ENCODE measurements at regions of chr18 and their contacts with region 1.

Region 1: GRCh38 chr18:48675352-48675761 is 136.5 kb downstream of the CTIF start:
- DNase-seq: peak; percentile 85
- ATAC-seq: peak; percentile 93
- H3K4me3 ChIP-seq: no peak overlapping the region
- H3K4me3 Mint-ChIP-seq: no peak overlapping the region
- H3K27ac ChIP-seq: no peak overlapping the region
- H3K27ac Mint-ChIP-seq: no peak overlapping the region
- H3K4me1 ChIP-seq: peaks cover 4 to 12% of the 10 kb centered on the region in 2 donors
- H3K4me1 Mint-ChIP-seq: peaks cover 10% of the 10 kb centered on the region
- H3K27me3 ChIP-seq: no peaks in the 10 kb centered on the region
- H3K27me3 Mint-ChIP-seq: no peaks in the 10 kb centered on the region
- CTCF ChIP-seq: peak; percentile 95

Region 2: GRCh38 chr18:47790036-47790435 is 885.3 kb before region 1 on chr18:
- CTCF ChIA-PET with region 1: no interaction called
- POLR2A ChIA-PET with region 1: no interaction called
- intact Hi-C with region 1: no loop called
- DNase-seq: no peak
- ATAC-seq: no peak
- H3K4me3 ChIP-seq: no peak overlapping the region
- H3K4me3 Mint-ChIP-seq: no peak overlapping the region
- H3K27ac ChIP-seq: no peak overlapping the region
- H3K27ac Mint-ChIP-seq: no peak overlapping the region
- H3K4me1 ChIP-seq: no peaks in the 10 kb centered on the region
- H3K4me1 Mint-ChIP-seq: no peaks in the 10 kb centered on the region
- H3K27me3 ChIP-seq: peaks cover 0 to 4% (median 4%) of the 10 kb centered on the region in 4 experiments
- H3K27me3 Mint-ChIP-seq: peaks cover 34% of the 10 kb centered on the region
- CTCF ChIP-seq: no peak

Region 3: DNA sequence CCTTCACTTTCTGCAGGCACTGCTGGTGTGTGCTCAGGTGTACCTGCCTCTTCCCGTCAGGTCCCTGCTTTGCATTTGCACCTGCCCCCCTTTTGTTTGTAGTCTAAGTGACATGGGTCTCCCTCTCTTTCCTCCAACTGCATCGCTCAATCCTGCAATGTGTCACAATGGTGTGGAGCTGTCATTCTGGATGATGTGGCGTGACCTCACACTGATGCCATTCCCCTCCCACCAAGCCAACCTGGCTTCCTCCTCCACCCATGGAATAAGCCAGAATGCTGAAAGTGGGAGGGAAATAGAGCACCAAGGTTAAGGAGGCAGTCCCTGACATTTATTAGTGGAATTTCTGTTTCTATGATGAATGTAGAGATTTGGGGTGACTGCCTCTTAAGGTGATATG is 422.8 kb before region 1 on chr18:
- CTCF ChIA-PET with region 1: no interaction called
- POLR2A ChIA-PET with region 1: no interaction called
- intact Hi-C with region 1: no loop called
- DNase-seq: no peak
- ATAC-seq: no peak
- H3K4me3 ChIP-seq: no peak overlapping the region
- H3K4me3 Mint-ChIP-seq: no peak overlapping the region
- H3K27ac ChIP-seq: no peak overlapping the region
- H3K27ac Mint-ChIP-seq: no peak overlapping the region
- H3K4me1 ChIP-seq: no peaks in the 10 kb centered on the region
- H3K4me1 Mint-ChIP-seq: no peaks in the 10 kb centered on the region
- H3K27me3 ChIP-seq: peaks cover 0 to 5% (median 0%) of the 10 kb centered on the region in 4 experiments
- H3K27me3 Mint-ChIP-seq: peaks cover 21% of the 10 kb centered on the region
- CTCF ChIP-seq: no peak

Region 4: GRCh38 chr18:48777026-48777743 is 101.8 kb after region 1 on chr18:
- CTCF ChIA-PET with region 1: no interaction called
- POLR2A ChIA-PET with region 1: no interaction called
- intact Hi-C with region 1: loop called (anchors 1 kb)
- DNase-seq: peak; percentile 70
- ATAC-seq: peak; percentile 79
- H3K4me3 ChIP-seq: no peak overlapping the region
- H3K4me3 Mint-ChIP-seq: no peak overlapping the region
- H3K27ac ChIP-seq: no peak overlapping the region
- H3K27ac Mint-ChIP-seq: no peak overlapping the region
- H3K4me1 ChIP-seq: peaks cover 16 to 32% of the 10 kb centered on the region in 2 donors
- H3K4me1 Mint-ChIP-seq: peaks cover 27% of the 10 kb centered on the region
- H3K27me3 ChIP-seq: no peaks in the 10 kb centered on the region
- H3K27me3 Mint-ChIP-seq: no peaks in the 10 kb centered on the region
- CTCF ChIP-seq: peak; percentile 93

Region 5: DNA sequence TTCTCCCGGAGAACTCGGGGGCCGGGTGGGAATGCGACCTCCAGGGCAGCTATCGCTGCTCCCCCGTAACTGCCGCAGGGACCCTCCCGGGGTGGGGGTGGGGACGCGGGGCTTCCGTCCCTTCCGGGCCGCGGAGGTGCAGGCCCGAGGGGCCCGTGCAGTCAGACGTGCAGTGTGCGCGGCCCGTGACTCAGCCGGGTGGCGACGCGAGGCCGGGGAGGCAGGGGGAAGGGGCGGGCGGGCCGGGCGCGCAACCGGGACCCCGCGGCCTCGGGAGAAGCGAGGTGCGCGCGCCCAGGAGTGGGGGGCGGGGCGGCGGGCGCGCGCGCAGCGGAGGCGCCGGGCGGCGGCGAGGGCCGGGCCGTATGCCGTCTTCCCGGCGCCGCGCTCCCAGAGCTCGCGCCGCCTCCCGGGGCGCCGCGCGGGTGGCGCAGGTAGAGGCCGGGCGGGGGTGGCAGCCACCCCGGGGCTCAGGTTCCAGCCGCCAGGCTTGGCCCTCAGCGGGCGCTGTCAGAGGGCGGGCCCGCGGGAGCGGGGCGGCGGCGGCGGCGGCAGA is 300.4 kb after region 1 on chr18:
- CTCF ChIA-PET with region 1: no interaction called
- POLR2A ChIA-PET with region 1: no interaction called
- intact Hi-C with region 1: loop called (anchors 10 kb)
- DNase-seq: peak; percentile 63
- ATAC-seq: peak; percentile 75
- H3K4me3 ChIP-seq: peak overlapping the region in 4 of 5 experiments; percentile 33 to 71 (median 54)
- H3K4me3 Mint-ChIP-seq: peak overlapping the region; percentile 86
- H3K27ac ChIP-seq: no peak overlapping the region
- H3K27ac Mint-ChIP-seq: no peak overlapping the region
- H3K4me1 ChIP-seq: peaks cover 14 to 16% of the 10 kb centered on the region in 2 donors
- H3K4me1 Mint-ChIP-seq: peaks cover 13% of the 10 kb centered on the region
- H3K27me3 ChIP-seq: peaks cover 0 to 36% (median 12%) of the 10 kb centered on the region in 4 experiments
- H3K27me3 Mint-ChIP-seq: peaks cover 29% of the 10 kb centered on the region
- CTCF ChIP-seq: no peak

Region 6: DNA sequence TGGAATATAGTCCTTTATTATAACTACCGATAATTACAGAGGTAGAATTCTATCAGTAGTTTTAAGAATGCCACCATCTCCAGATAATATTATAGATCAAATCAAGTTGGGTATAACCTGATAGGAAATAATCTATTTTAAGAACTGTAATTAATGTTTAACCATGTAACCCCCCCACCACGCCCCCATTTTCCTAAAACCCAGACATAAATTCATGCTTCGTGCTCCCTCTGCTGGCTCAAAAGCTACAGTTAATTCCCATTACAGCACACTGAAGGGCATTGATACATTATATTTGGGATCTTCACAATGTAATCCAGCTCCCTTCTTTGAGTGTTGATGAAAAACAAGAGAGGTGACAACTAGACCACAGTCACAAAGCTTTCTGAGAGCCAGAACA is 503.4 kb after region 1 on chr18:
- CTCF ChIA-PET with region 1: interaction called, 8 read pairs
- POLR2A ChIA-PET with region 1: no interaction called
- intact Hi-C with region 1: loop called (anchors 1 kb)
- DNase-seq: peak; percentile 40
- ATAC-seq: no peak
- H3K4me3 ChIP-seq: no peak overlapping the region
- H3K4me3 Mint-ChIP-seq: no peak overlapping the region
- H3K27ac ChIP-seq: no peak overlapping the region
- H3K27ac Mint-ChIP-seq: no peak overlapping the region
- H3K4me1 ChIP-seq: peaks cover 12 to 18% of the 10 kb centered on the region in 2 donors
- H3K4me1 Mint-ChIP-seq: peaks cover 29% of the 10 kb centered on the region
- H3K27me3 ChIP-seq: no peaks in the 10 kb centered on the region
- H3K27me3 Mint-ChIP-seq: no peaks in the 10 kb centered on the region
- CTCF ChIP-seq: peak; percentile 47

Region 7: GRCh38 chr18:49227441-49228165 is 552.2 kb after region 1 on chr18:
- CTCF ChIA-PET with region 1: no interaction called
- POLR2A ChIA-PET with region 1: no interaction called
- intact Hi-C with region 1: no loop called
- DNase-seq: no peak
- ATAC-seq: no peak
- H3K4me3 ChIP-seq: no peak overlapping the region
- H3K4me3 Mint-ChIP-seq: no peak overlapping the region
- H3K27ac ChIP-seq: no peak overlapping the region
- H3K27ac Mint-ChIP-seq: no peak overlapping the region
- H3K4me1 ChIP-seq: no peaks in the 10 kb centered on the region
- H3K4me1 Mint-ChIP-seq: no peaks in the 10 kb centered on the region
- H3K27me3 ChIP-seq: no peaks in the 10 kb centered on the region
- H3K27me3 Mint-ChIP-seq: no peaks in the 10 kb centered on the region
- CTCF ChIP-seq: no peak

Region 8: GRCh38 chr18:49335677-49336076 is 660.3 kb after region 1 on chr18:
- CTCF ChIA-PET with region 1: no interaction called
- POLR2A ChIA-PET with region 1: no interaction called
- intact Hi-C with region 1: loop called (anchors 5 kb)
- DNase-seq: no peak
- ATAC-seq: no peak
- H3K4me3 ChIP-seq: no peak overlapping the region
- H3K4me3 Mint-ChIP-seq: no peak overlapping the region
- H3K27ac ChIP-seq: no peak overlapping the region
- H3K27ac Mint-ChIP-seq: no peak overlapping the region
- H3K4me1 ChIP-seq: no peaks in the 10 kb centered on the region
- H3K4me1 Mint-ChIP-seq: no peaks in the 10 kb centered on the region
- H3K27me3 ChIP-seq: no peaks in the 10 kb centered on the region
- H3K27me3 Mint-ChIP-seq: no peaks in the 10 kb centered on the region
- CTCF ChIP-seq: no peak

Region 9: DNA sequence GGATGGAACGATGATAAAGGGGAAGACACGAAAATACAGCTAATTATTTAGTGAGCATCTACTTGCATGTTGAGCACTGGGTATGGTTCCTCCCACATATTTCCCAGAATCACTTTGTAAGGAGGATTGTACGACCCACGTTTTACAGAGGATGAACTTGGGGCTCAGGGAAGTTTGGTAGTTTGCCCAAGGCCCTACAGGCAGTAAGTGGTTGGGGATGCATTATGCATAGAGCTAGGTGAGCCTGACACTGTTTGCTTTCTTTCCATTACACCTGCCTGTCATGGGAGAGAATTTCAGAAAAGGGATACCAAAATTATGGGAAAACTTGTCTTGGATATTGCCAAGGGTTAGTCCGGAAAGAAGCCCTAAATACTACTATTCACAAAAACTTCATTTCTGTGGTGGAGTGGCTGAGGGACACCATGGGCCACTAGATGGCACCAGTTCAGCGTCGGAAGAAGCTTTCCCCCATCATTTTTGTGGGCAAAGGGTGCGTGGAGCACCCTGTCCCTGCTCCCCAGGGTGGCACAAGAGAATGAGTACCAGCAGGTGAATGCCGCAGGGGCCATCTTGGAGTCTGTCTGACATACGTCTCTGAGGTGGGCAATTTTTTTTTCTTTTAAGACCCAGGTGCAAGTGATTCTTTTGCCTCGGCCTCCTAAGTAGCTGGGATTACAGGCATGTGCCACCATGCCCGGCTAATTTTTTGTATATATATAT is 835.2 kb after region 1 on chr18:
- CTCF ChIA-PET with region 1: interaction called, 3 read pairs
- POLR2A ChIA-PET with region 1: no interaction called
- intact Hi-C with region 1: loop called (anchors 5 kb)
- DNase-seq: peak; percentile 70
- ATAC-seq: peak; percentile 39
- H3K4me3 ChIP-seq: no peak overlapping the region
- H3K4me3 Mint-ChIP-seq: no peak overlapping the region
- H3K27ac ChIP-seq: no peak overlapping the region
- H3K27ac Mint-ChIP-seq: no peak overlapping the region
- H3K4me1 ChIP-seq: no peaks in the 10 kb centered on the region
- H3K4me1 Mint-ChIP-seq: no peaks in the 10 kb centered on the region
- H3K27me3 ChIP-seq: peaks cover 0 to 3% (median 0%) of the 10 kb centered on the region in 4 experiments
- H3K27me3 Mint-ChIP-seq: peaks cover 22% of the 10 kb centered on the region
- CTCF ChIP-seq: peak; percentile 82

Region 10: DNA sequence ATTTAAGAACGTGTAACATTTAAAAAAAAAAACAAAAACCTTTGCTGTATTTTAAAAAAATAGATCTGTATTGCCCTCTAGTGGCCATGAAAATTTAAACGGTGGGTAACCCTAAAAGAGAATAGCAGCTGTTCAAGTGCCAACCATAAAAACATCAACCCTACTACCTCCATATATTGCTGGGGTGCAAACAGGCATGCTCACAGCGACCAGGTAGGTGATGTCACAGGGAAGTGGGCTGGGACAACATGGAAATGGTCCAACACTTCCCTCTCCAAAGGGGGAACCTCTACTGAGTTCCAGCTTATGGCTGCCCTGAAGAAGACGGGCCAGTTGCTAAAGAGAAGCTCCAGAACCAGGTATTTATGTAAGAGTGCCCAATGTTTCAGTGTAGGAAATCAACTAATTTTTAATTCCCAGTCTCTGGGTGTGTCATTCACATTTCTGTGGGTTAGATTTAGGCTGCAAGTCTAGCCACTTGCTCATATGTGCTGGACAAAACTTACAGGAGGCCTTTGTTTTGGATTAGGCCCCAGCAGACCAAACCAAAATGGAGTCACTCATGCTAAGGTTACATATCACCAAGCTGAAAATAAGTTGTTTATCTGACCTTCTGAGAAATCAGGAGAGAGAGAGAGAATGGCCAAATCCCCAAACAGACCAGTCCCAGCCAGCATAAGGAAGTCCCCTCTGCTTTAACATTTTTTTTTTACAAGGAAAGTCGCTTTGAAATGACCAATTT is 1754.0 kb after region 1 on chr18:
- CTCF ChIA-PET with region 1: no interaction called
- POLR2A ChIA-PET with region 1: no interaction called
- intact Hi-C with region 1: loop called (anchors 5 kb)
- DNase-seq: peak; percentile 48
- ATAC-seq: no peak
- H3K4me3 ChIP-seq: no peak overlapping the region
- H3K4me3 Mint-ChIP-seq: no peak overlapping the region
- H3K27ac ChIP-seq: no peak overlapping the region
- H3K27ac Mint-ChIP-seq: no peak overlapping the region
- H3K4me1 ChIP-seq: no peaks in the 10 kb centered on the region
- H3K4me1 Mint-ChIP-seq: no peaks in the 10 kb centered on the region
- H3K27me3 ChIP-seq: peaks cover 0 to 9% (median 5%) of the 10 kb centered on the region in 4 experiments
- H3K27me3 Mint-ChIP-seq: peaks cover 19% of the 10 kb centered on the region
- CTCF ChIP-seq: peak; percentile 75

Measured in B cell (primary cell).